ENCODE measurements at regions of chr6 and their contacts with region 1.

Region 1: DNA sequence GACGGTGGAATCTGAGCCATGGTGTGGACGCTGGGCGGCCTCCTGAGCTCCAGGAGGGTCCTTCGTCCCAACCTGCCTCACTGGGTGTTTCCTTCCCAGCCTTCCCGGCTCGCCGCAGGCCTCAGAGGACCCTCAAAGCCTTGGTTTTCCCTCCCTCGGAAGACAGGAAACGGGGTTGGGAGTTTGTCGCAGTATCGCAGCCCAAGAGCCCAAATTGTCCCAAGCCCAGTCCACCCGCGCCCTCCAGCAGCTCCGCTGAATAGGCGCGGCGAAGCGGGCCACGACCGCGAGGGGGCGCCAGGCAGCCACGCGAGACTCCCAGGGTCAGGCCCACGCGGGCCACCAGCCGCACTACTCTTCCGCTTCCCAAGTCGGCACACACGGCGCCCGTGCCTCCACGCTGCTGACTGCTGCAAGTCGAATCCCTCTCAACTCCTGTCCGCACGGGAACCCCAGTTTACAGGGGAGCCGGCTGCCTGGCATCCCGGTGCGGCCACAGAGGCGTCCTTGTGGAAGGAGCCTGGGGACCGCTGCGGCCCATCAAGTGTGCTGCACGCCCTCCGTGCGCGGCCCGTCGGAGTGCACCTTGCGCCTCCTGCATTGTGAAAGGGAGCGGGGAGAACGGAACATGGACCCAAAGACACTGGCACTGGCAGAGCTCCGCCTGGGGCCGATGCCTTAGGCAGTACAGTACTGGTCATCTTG is 40.4 kb upstream of the HMGA1 start:
- DNase-seq: peak; percentile 95
- H3K4me3 ChIP-seq: peak overlapping the region; percentile 54 to 61 (median 56)
- H3K27ac ChIP-seq: no peak overlapping the region
- H3K4me1 ChIP-seq: peaks cover 4 to 12% (median 11%) of the 10 kb centered on the region in 4 donors
- H3K27me3 ChIP-seq: no peaks in the 10 kb centered on the region
- CTCF ChIP-seq: peak; percentile 95 to 100 (median 96)
- EP300 ChIP-seq: no peak
- POLR2A ChIP-seq: no peak

Region 2: DNA sequence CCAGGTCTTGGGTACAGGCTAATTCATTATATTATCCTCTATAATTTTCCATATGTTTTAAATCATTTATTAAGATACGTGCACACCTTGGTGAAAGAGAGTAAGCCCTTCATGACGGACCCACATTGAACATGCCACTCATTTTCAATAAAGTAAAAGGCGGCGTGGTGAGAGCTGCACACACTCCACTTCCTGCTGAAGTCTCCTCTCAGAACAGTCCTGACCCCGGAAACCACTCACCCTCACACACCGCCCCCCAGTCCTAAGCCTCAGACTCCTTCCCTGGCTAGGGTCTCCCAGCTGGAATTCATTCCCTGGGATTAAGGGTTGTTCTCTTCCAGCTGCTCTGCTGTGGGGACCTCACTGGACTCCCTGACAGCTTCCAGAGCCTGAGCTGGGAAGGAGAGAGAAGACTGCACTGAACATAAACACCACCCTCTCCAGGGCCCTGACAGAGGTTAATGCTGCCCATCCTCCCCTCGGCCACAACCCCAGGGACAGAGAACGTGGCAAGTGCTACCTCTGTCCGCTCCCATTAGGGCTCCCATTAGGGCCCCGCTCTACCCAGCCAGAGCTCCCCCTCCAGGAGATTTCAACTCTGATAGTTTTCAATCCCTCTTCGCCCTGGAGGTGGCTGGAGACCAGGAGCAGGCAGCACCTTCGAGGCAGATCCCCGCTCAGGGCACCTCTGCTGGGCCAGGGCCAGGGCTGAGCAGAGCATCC is 75.2 kb before region 1 on chr6:
- intact Hi-C with region 1: no loop called
- DNase-seq: no peak
- H3K4me3 ChIP-seq: no peak overlapping the region
- H3K27ac ChIP-seq: no peak overlapping the region
- H3K4me1 ChIP-seq: no peaks in the 10 kb centered on the region
- H3K27me3 ChIP-seq: peaks cover 0 to 76% (median 0%) of the 10 kb centered on the region in 4 donors
- CTCF ChIP-seq: no peak
- EP300 ChIP-seq: no peak
- POLR2A ChIP-seq: no peak

Region 3: GRCh38 chr6:34370361-34370760 is 174.1 kb after region 1 on chr6:
- intact Hi-C with region 1: no loop called
- DNase-seq: no peak
- H3K4me3 ChIP-seq: no peak overlapping the region
- H3K27ac ChIP-seq: no peak overlapping the region
- H3K4me1 ChIP-seq: peaks cover 12 to 32% (median 21%) of the 10 kb centered on the region in 4 donors
- H3K27me3 ChIP-seq: no peaks in the 10 kb centered on the region
- CTCF ChIP-seq: no peak
- EP300 ChIP-seq: no peak
- POLR2A ChIP-seq: no peak

Region 4: DNA sequence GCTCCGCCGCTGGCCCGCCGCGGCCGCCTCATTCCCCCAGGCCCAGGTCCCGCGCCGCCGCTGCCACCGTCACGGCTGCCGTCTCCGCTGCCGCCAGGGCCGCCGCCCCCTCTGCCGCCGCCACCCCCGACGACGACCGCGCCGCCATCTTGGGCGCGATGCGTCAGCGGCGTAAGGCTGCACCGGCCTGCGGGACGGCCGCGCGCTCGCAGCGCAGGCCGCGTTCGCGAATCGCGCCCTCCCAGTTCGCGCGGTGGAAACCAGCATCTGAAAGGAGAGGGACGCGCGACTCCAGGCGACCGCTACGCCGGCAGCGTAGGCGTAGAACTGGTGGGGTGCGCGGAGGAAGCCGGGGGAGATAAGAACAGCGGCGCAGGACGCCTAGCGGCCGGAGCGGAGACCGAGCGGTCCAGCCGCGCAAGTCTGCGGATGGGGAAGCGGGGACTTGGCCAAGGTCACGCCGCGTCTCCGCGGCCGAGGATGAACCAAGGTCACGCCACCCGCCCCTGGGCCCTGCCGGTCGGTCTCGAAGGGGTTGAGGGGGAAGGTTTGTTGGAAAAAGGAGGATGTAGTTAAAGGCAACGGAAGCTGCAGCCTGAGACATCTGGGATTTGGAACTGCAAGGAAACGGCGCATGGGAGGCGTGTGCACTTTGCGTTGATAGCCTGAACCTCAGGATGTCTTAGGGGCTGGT is 196.4 kb after region 1 on chr6 and contains the start of gene NUDT3:
- intact Hi-C with region 1: loop called (anchors 5 kb)
- DNase-seq: peak; percentile 96
- H3K4me3 ChIP-seq: peak within 1 kb of the TSS; percentile 78 to 97 (median 93)
- H3K27ac ChIP-seq: peak within 1 kb of the TSS; percentile 92 to 98 (median 96)
- H3K4me1 ChIP-seq: peaks cover 42 to 57% (median 49%) of the 10 kb centered on the region in 4 donors
- H3K27me3 ChIP-seq: no peaks in the 10 kb centered on the region
- CTCF ChIP-seq: peak; percentile 68 to 83 (median 76)
- EP300 ChIP-seq: no peak
- POLR2A ChIP-seq: peak; percentile 15
- total RNA-seq, gene NUDT3: 37.1 to 57.2 (median 47.4) TPM

Region 5: GRCh38 chr6:34414999-34415858 is 219.0 kb after region 1 on chr6:
- intact Hi-C with region 1: loop called (anchors 2 kb)
- DNase-seq: no peak
- H3K4me3 ChIP-seq: no peak overlapping the region
- H3K27ac ChIP-seq: peak overlapping the region; percentile 67 to 76 (median 72)
- H3K4me1 ChIP-seq: peaks cover 4 to 19% (median 12%) of the 10 kb centered on the region in 4 donors
- H3K27me3 ChIP-seq: no peaks in the 10 kb centered on the region
- CTCF ChIP-seq: peak; percentile 74 to 86 (median 76)
- EP300 ChIP-seq: no peak
- POLR2A ChIP-seq: no peak

Region 6: DNA sequence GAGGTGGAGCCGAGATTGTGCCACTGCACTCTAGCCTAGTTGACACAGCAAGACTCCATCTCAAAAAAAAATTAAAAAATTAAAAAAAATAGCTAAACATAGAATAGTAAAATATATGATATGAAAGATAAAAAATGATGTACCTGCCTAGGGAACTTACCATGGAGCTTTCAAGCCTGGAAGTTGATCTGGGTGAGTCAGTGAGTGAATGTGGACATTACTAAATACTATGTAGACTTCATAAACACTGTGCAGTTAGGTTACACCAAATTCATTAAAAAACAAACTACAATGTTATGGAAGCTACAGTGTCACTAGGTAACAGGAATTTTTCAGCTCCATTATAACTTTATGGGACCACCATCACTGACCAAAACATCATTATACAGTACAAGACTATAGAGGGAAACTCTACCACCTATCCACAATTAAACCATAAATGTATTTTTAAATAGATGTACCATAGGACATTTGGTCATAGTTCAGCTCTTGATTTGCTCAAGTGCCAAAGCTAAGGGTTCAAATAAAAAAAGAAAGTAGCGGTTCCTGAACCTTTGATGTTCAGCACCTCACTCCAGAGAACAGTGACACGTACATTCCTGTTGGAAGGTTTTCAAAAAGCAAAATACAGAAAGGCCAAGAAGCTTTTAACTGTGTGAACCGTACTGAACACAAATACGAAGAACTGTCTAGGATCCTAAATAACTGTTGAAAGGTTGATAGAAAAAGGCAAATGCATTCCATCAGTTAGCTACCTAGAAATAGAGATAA is 412.2 kb after region 1 on chr6:
- intact Hi-C with region 1: loop called (anchors 5 kb)
- DNase-seq: no peak
- H3K4me3 ChIP-seq: no peak overlapping the region
- H3K27ac ChIP-seq: peak overlapping the region in 3 of 4 donors; percentile 41 to 64 (median 61)
- H3K4me1 ChIP-seq: peaks cover 22 to 38% (median 25%) of the 10 kb centered on the region in 4 donors
- H3K27me3 ChIP-seq: no peaks in the 10 kb centered on the region
- CTCF ChIP-seq: no peak
- EP300 ChIP-seq: no peak
- POLR2A ChIP-seq: no peak

Measured in esophagus muscularis mucosa (tissue), 4 donors.